ENCODE measurements at regions of chr15 and their contacts with region 1.

Region 1: DNA sequence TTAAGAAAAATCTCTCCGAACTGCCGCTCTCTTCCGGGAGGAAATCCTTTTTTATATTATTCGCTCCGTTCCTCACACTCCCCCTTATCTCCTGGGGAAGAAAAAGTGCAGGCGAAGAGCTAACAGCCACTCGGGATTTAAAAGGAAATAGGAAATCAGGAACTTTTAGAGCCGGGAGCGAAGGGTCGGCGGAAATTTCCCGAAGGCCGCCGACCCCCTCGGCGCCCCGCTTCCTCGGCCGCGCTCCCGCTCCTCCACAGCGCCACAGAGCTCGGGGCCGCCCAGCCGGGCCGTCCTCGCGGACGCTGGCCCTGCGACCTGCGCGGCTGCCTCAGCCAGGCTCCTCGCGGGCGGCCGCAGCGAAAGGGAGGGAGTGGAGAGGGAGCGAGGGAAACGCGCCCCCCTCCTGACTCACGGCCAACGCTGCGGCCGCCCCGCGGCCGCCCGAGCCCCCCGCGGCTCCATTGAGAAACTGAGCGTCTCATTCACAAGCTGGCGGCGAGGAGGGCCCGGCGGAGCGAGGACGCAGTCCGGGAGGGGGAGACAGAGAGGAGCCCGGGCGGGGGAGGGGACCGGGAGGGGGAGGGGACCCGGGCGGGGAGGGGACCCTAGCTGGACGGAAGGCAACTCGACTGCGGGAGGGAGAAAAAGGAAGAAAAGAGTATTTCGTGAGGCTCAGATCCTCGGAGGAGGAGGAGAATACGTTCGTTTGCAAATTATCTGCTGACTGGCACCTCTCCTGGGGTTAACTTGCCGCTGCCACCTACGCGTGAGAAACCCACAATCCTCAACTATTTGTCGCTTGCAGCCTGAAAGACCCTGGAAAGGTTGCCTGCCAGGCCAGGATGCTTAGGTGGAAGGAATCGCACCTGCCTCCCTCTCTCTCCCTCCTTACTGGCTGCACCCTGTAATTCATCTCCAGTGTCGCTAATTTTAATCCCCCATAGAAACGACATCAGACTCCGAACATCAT is at the start of gene PTPN9:
- DNase-seq: peak; percentile 84 to 91 (median 87)
- ATAC-seq: peak; percentile 75 to 92 (median 90)
- H3K4me3 ChIP-seq: peak within 1 kb of the TSS; percentile 68 to 100 (median 88)
- H3K27ac ChIP-seq: peak within 1 kb of the TSS; percentile 80 to 98 (median 92)
- H3K4me1 ChIP-seq: peaks cover 0 to 29% (median 14%) of the 10 kb centered on the region in 12 donors
- H3K27me3 ChIP-seq: no peaks in the 10 kb centered on the region
- CTCF ChIP-seq: peak; percentile 37 to 72 (median 56)
- POLR2A ChIP-seq: no peak
- total RNA-seq, gene PTPN9: 4.6 to 16.8 (median 8.8) TPM

Region 2: GRCh38 chr15:75347879-75348561 is 231.2 kb before region 1 on chr15:
- intact Hi-C with region 1: no loop called
- DNase-seq: peak in 1 of 5 donors; percentile 35
- ATAC-seq: peak in 3 of 4 donors; percentile 39 to 48 (median 41)
- H3K4me3 ChIP-seq: peak overlapping the region; percentile 67 to 98 (median 92)
- H3K27ac ChIP-seq: peak overlapping the region in 10 of 12 donors; percentile 37 to 85 (median 73)
- H3K4me1 ChIP-seq: peaks cover 0 to 40% (median 13%) of the 10 kb centered on the region in 12 donors
- H3K27me3 ChIP-seq: peaks cover 0 to 4% (median 0%) of the 10 kb centered on the region in 9 donors
- CTCF ChIP-seq: no peak
- POLR2A ChIP-seq: no peak

Region 3: DNA sequence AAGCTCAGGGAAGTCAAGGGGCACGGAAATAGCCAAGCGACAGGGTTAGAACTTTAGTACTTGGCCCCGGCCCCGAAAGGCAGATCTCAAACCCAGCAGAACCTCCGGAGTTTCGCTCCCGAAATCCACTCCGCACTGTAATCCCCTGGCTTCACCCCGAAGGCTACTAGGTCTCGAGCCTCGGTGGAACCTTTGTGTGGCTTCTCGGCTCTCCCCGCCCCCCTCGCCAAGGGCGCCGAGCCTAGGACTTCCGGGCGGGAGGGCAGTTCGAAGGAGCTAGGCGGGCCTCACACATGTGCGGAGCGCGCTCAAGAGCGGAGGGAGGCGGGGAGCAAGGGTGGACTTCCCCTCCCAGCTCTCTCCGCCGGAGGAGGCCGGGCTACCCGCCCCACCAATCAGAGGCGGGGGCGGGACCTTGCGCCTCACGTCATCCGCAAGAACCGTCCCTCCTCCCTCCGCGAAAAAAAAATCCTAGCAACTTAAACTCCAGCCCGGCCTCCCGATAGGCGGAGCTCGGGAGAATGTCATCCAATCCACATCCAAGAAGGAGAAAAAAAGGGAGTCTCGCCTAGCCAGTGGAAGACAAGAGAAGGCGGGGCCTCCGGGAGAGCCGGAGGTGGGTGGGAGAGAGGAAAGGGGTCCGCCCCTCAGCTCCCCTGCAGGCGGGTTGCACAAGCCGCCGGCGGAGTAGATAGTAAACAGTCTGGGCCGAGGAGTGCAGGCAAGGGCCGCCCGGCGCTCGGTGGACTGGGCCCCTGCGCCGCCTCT is 125.3 kb before region 1 on chr15:
- intact Hi-C with region 1: loop called in 3 of 10 experiments (anchors 5 kb)
- DNase-seq: peak; percentile 98 to 99 (median 98)
- ATAC-seq: peak; percentile 65 to 76 (median 70)
- H3K4me3 ChIP-seq: peak overlapping the region; percentile 84 to 98 (median 95)
- H3K27ac ChIP-seq: peak overlapping the region; percentile 94 to 100 (median 98)
- H3K4me1 ChIP-seq: peaks cover 4 to 37% (median 26%) of the 10 kb centered on the region in 12 donors
- H3K27me3 ChIP-seq: no peaks in the 10 kb centered on the region
- CTCF ChIP-seq: peak in 4 of 12 donors; percentile 10 to 39 (median 20)
- POLR2A ChIP-seq: peak in 1 of 2 donors; percentile 52

Region 4: DNA sequence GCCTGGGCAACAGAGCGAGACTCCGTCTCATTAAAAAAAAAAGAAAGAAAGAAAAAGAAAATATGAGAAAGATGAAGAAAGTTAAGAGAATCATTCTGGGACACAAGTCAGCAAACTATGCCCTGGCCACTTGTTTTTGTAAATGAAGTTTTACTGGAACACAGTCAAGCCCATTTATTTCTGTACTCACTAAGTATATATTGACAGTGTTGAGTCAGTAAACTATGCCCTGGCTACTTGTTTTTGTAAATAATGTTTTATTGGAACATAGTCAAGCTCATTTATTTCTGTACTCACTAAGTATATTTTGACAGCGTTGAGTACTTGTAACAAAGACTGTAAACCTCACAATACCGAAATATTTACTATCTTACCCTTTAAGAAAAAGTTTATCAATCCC is 85.5 kb before region 1 on chr15:
- intact Hi-C with region 1: no loop called
- DNase-seq: no peak
- ATAC-seq: no peak
- H3K4me3 ChIP-seq: no peak overlapping the region
- H3K27ac ChIP-seq: no peak overlapping the region
- H3K4me1 ChIP-seq: no peaks in the 10 kb centered on the region
- H3K27me3 ChIP-seq: no peaks in the 10 kb centered on the region
- CTCF ChIP-seq: no peak
- POLR2A ChIP-seq: no peak

Region 5: DNA sequence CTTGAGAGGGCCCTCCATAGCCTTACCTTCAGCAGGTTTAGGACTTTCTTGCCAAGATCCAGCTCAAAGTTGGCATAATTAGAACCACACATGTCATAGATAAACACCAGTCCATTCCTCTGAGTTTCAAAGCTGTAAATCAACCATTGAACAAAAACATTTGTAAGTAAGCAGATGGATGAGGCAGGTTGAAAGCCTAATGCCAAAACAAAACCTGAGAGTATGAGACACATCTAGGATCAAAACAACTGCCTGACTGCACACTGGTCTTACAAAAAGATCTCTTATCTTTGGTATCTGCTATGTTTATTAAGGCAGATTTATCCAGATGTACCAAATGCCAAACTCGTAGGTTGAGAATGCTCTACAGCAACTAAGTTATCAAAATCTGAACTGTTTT is 62.0 kb before region 1 on chr15:
- intact Hi-C with region 1: loop called in 1 of 10 experiments (anchors 10 kb)
- DNase-seq: no peak
- ATAC-seq: no peak
- H3K4me3 ChIP-seq: no peak overlapping the region
- H3K27ac ChIP-seq: no peak overlapping the region
- H3K4me1 ChIP-seq: no peaks in the 10 kb centered on the region
- H3K27me3 ChIP-seq: no peaks in the 10 kb centered on the region
- CTCF ChIP-seq: no peak
- POLR2A ChIP-seq: no peak

Region 6: DNA sequence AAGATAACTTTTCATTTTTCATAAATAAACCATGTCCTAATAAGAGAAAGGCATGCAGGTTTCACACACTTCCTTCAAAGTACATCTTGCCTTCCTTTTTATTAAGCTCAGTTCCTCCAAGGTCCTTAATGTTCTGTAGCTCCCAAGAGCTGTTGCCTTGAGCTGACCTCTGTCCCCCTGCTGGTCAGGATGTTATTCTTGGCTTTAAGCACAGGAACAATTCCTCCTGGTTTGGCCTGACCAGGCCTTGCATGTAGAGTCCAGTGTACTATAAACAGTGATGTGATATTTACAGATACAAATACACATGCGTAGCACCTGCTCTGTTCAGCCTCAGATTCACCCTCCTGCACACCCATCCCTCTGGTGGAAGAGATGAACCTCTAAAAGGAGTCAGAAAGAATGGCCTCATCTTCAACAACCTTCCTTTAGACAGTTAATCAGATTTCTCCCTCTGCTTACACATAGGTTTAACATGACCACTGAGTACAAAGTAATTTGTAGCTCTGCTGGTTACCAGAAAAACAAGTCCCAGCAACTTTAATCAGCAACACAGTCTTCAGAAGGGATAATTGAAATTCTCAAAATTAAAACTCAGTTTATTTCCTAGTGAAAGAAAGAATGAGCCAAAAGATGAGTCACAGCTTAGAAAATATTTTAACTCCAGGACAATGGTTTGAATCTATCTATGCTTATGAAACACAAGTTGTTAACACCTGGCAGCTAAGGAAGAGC is 46.7 kb before region 1 on chr15:
- intact Hi-C with region 1: loop called in 6 of 10 experiments (anchors 2 to 5 kb)
- DNase-seq: peak; percentile 63 to 82 (median 70)
- ATAC-seq: peak; percentile 90 to 97 (median 96)
- H3K4me3 ChIP-seq: no peak overlapping the region
- H3K27ac ChIP-seq: peak overlapping the region; percentile 53 to 82 (median 72)
- H3K4me1 ChIP-seq: peaks cover 0 to 45% (median 31%) of the 10 kb centered on the region in 12 donors
- H3K27me3 ChIP-seq: no peaks in the 10 kb centered on the region
- CTCF ChIP-seq: peak; percentile 30 to 64 (median 50)
- POLR2A ChIP-seq: no peak

Region 7: GRCh38 chr15:75542386-75542797 is 36.8 kb before region 1 on chr15:
- intact Hi-C with region 1: loop called in 1 of 10 experiments (anchors 5 kb)
- DNase-seq: no peak
- ATAC-seq: peak; percentile 47 to 74 (median 69)
- H3K4me3 ChIP-seq: no peak overlapping the region
- H3K27ac ChIP-seq: peak overlapping the region in 11 of 12 donors; percentile 12 to 60 (median 37)
- H3K4me1 ChIP-seq: peaks cover 0 to 44% (median 23%) of the 10 kb centered on the region in 12 donors
- H3K27me3 ChIP-seq: no peaks in the 10 kb centered on the region
- CTCF ChIP-seq: no peak
- POLR2A ChIP-seq: no peak

Region 8: DNA sequence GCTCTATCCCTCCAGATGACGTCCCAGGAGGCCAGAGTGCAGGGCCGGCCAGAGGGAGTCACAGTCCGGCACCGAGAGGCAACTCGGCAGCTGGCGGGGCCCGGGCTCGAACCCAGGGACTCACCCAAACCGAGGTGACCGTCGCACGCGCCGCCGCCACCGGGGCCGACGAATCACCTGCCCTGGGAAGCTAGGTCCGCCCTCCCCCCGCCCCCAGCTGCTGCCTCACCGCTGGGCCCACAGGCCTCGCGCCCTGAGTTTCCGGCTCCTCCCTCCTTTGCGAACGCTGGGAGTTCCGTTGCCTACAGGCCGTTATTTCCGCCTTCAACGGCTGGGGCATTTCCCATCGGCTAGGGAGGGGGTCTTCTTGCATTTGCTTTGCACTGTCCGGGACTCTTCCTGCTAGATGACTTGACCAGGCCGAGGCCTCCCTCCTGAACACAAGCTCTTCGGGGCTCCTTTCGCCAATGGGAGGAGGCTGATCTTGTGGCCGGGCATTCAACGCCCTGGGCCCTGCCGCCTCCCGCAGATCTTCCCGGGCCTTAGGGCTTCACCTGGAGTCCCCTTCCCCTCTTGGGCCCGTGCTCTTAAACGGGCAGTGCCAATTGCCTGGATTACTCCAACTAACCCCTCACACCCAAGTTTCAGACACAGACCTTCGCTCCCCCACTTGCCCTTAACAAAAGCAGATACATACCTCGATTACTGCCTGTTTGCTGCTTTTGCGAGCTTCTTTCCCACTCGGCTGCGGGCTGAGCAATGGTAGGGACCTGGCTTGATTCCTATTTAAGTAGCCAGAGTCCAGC is 46.5 kb after region 1 on chr15 and contains the start of gene SNUPN:
- intact Hi-C with region 1: loop called in 4 of 10 experiments (anchors 2 to 5 kb)
- DNase-seq: peak; percentile 96 to 97 (median 96)
- ATAC-seq: peak; percentile 85 to 95 (median 94)
- H3K4me3 ChIP-seq: peak within 1 kb of the TSS; percentile 67 to 98 (median 81)
- H3K27ac ChIP-seq: peak within 1 kb of the TSS; percentile 93 to 100 (median 97)
- H3K4me1 ChIP-seq: peaks cover 0 to 25% (median 13%) of the 10 kb centered on the region in 12 donors
- H3K27me3 ChIP-seq: no peaks in the 10 kb centered on the region
- CTCF ChIP-seq: no peak
- POLR2A ChIP-seq: peak in 1 of 2 donors; percentile 57
- total RNA-seq, gene SNUPN: 13.2 to 21.6 (median 14.5) TPM